ENCODE measurements at regions of chr11 and their contacts with region 1.

Region 1: DNA sequence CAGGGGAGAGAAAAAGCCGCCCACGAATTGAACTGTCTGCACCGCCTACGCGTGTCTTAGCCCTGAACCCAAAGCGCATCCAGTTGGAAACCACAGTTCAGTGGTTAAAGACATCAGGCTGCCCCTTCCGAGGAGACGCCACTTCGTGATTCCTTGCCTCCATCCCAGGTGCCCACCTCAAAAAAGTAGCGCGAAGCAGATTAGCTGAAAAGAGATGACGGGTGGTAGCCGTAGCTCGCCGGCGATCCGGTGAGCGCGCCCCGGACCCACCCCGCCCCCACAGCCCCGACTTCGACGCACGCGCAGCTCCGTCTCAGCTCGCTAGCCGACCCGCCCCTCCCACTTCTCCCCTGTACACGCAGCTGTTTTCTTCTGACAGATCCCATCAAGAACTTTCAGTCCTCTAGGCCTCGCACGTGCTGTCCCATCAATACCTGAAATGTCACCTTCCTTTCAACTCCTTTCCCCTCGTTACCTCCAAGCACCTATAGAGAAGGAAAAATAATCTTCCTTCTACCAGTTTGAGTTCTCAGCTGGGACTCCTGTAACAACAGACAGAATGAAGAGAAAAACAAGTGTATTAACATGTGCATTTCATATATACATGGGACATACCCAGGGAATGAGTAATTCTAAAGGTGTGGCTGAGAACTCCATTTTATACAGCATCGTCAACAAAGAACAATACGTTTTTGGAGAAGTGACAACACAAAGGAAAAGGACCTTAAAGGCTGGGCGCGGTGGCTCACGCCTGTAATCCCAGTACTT is 49.5 kb downstream of the OR4D9 start:
- DNase-seq: peak; percentile 88
- H3K4me3 Mint-ChIP-seq: peak overlapping the region; percentile 78
- H3K27ac Mint-ChIP-seq: peak overlapping the region; percentile 99
- H3K4me1 Mint-ChIP-seq: peaks cover 13% of the 10 kb centered on the region
- H3K27me3 Mint-ChIP-seq: no peaks in the 10 kb centered on the region
- CTCF ChIP-seq: no peak

Region 2: DNA sequence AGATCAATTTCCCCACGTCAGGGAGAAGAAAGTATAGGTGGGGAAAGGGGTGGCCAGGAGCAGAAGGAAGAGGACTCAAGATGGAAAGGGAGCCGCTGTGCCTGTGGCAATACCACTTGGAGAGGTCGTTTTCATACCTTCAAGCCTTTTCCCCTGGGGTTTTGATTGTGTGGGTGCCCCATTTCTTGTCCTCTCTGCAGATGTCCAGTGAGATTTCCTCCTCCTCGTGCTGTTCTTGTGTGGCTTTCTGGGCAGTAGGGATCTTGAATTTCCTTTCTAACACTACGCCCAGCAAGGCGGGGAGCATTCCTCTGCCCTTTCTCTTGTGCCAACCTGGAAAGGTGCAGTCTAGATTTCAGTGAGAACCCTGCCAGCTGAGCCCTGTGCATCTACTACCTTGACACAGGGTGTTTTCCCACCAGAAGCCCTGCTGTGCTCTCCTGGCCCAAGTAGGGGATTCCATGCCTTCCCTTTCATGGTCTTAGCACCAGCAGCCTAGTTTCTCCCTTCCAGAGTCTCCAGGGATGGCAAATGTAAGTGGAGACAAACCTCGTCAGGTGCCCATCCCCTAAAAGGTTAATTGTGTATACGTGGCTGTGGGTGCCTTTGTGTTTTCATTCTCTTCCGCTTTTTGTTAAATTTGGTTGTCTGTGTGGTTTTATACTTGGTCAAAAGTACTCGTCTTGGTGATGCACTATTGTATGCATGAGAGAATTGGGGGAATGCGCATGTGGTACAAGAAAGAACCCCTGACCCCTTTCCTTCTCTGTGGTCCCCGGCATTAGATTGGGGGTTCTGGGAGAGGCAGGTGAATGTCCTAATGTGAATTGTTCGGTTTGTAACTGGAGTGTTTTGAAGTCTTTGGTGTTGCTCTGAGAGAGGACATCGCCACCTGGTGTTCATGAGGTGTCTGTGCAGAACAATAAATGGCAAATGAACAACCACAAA is 276.8 kb before region 1 on chr11:
- CTCF ChIA-PET with region 1: no interaction called
- POLR2A ChIA-PET with region 1: no interaction called
- intact Hi-C with region 1: no loop called
- DNase-seq: peak; percentile 67
- H3K4me3 Mint-ChIP-seq: no peak overlapping the region
- H3K27ac Mint-ChIP-seq: no peak overlapping the region
- H3K4me1 Mint-ChIP-seq: peaks cover 7% of the 10 kb centered on the region
- H3K27me3 Mint-ChIP-seq: peaks cover 44% of the 10 kb centered on the region
- CTCF ChIP-seq: peak; percentile 74

Region 3: GRCh38 chr11:59437770-59438169 is 123.1 kb before region 1 on chr11:
- CTCF ChIA-PET with region 1: no interaction called
- POLR2A ChIA-PET with region 1: no interaction called
- intact Hi-C with region 1: no loop called
- DNase-seq: no peak
- H3K4me3 Mint-ChIP-seq: no peak overlapping the region
- H3K27ac Mint-ChIP-seq: no peak overlapping the region
- H3K4me1 Mint-ChIP-seq: no peaks in the 10 kb centered on the region
- H3K27me3 Mint-ChIP-seq: peaks cover 59% of the 10 kb centered on the region
- CTCF ChIP-seq: no peak

Region 4: DNA sequence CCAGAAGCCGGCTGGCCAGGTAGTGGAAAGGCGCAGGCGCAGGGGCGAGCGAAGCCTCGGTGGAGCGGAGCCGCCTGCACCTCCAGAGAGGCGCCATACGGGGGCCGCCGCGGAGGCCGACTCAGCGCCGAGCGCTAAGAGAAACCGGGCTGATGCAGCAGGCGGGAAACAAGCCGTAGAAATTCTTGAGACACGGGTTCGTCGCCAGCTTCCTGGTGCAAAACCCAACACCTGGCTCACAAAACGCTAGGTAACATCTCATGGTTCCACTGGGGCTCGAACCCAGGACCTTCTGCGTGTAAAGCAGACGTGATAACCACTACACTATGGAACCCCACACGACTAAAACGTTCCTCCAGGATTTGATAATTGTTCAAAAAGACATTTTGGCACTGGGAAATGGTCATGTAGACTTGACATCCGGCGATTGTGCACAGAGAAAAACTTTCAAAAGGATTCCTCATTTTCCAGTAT is 10.5 kb before region 1 on chr11:
- CTCF ChIA-PET with region 1: interaction called, 27 read pairs
- POLR2A ChIA-PET with region 1: interaction called, 73 read pairs
- intact Hi-C with region 1: loop called (anchors 1 kb)
- DNase-seq: peak; percentile 93
- H3K4me3 Mint-ChIP-seq: peak overlapping the region; percentile 92
- H3K27ac Mint-ChIP-seq: peak overlapping the region; percentile 98
- H3K4me1 Mint-ChIP-seq: peaks cover 21% of the 10 kb centered on the region
- H3K27me3 Mint-ChIP-seq: no peaks in the 10 kb centered on the region
- CTCF ChIP-seq: peak; percentile 40

Region 5: GRCh38 chr11:59573234-59573633 is 12.3 kb after region 1 on chr11:
- CTCF ChIA-PET with region 1: interaction called, 4 read pairs
- POLR2A ChIA-PET with region 1: interaction called, 19 read pairs
- intact Hi-C with region 1: no loop called
- DNase-seq: peak; percentile 58
- H3K4me3 Mint-ChIP-seq: no peak overlapping the region
- H3K27ac Mint-ChIP-seq: peak overlapping the region; percentile 78
- H3K4me1 Mint-ChIP-seq: peaks cover 19% of the 10 kb centered on the region
- H3K27me3 Mint-ChIP-seq: no peaks in the 10 kb centered on the region
- CTCF ChIP-seq: no peak